WTC11 (cell line): ENCODE measurements at regions of chr17 and their contacts with region 1.

Region 1: GRCh38 chr17:48678141-48678971 is 44.0 kb downstream of the PRAC1 start:
- DNase-seq: peak; percentile 89
- ATAC-seq: peak; percentile 95
- H3K4me3 Mint-ChIP-seq: peak overlapping the region; percentile 64
- H3K27ac Mint-ChIP-seq: no peak overlapping the region
- H3K4me1 Mint-ChIP-seq: peaks cover 7% of the 10 kb centered on the region
- H3K27me3 Mint-ChIP-seq: peaks cover 37% of the 10 kb centered on the region
- CTCF ChIP-seq: peak; percentile 95

Region 2: GRCh38 chr17:48663134-48663924 is 15.0 kb before region 1 on chr17:
- CTCF ChIA-PET with region 1: interaction called, 34 read pairs
- POLR2A ChIA-PET with region 1: no interaction called
- DNase-seq: no peak
- ATAC-seq: peak; percentile 72
- H3K4me3 Mint-ChIP-seq: no peak overlapping the region
- H3K27ac Mint-ChIP-seq: no peak overlapping the region
- H3K4me1 Mint-ChIP-seq: no peaks in the 10 kb centered on the region
- H3K27me3 Mint-ChIP-seq: peaks cover 35% of the 10 kb centered on the region
- CTCF ChIP-seq: no peak

Region 3: DNA sequence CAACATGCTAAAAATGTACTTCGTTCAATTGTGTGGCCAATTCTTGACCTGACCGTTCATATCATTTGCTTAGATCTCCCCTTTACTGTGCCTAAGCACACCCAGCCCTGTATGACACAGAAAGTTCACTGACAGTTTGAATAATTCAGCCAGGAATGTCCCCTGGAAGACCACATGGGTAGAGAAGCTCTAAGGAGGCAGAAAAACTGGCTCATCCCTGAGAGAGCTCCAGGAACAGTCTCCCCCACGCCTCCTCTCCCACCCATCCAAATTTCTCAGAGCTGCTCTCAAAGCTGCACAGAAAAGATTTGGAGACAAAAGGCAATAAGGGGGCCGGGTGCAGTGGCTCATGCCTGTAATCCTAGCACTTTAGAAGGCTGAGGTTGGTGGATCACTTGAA is 32.7 kb after region 1 on chr17:
- CTCF ChIA-PET with region 1: interaction called, 41 read pairs
- POLR2A ChIA-PET with region 1: interaction called, 3 read pairs
- DNase-seq: no peak
- ATAC-seq: no peak
- H3K4me3 Mint-ChIP-seq: no peak overlapping the region
- H3K27ac Mint-ChIP-seq: no peak overlapping the region
- H3K4me1 Mint-ChIP-seq: peaks cover 11% of the 10 kb centered on the region
- H3K27me3 Mint-ChIP-seq: peaks cover 78% of the 10 kb centered on the region
- CTCF ChIP-seq: no peak

Region 4: DNA sequence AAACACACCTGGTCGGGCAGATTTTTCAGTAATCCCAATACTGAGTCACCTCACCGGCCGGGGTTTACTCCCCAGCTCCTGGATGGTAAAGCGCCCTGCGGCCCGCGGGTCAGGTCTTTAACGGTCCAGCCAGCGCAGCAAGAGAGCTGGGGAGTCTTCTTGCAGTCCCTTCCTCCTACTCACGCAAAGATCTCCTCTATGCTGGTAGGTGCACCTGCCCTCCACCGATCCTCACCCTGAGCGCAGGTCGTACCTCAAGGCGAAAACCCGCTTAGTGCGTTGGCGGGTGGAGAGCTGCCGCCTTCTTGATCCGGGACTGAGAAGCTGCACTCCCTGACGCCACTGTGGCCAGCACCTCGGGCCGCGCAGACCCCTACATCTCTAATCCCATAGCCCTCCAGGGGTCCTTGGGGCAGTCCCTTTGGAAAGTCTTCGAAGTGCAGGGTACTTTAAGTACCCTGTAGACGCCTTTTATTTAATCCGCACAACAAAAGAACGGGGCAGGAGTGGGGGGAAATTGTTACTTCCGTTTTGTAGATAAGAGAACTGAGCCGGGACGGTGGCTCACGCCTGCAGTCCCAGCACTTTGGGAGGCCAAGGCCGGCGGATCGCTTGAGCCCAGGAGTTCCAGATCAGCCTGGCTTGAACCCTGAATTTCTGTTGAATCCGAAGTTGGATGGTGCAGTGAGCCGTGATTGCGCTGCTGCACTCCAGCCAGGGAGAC is 60.6 kb after region 1 on chr17:
- CTCF ChIA-PET with region 1: interaction called, 29 read pairs
- POLR2A ChIA-PET with region 1: no interaction called
- DNase-seq: no peak
- ATAC-seq: peak; percentile 68
- H3K4me3 Mint-ChIP-seq: peak overlapping the region; percentile 56
- H3K27ac Mint-ChIP-seq: no peak overlapping the region
- H3K4me1 Mint-ChIP-seq: peaks cover 15% of the 10 kb centered on the region
- H3K27me3 Mint-ChIP-seq: peaks cover 100% of the 10 kb centered on the region
- CTCF ChIP-seq: no peak

Region 5: DNA sequence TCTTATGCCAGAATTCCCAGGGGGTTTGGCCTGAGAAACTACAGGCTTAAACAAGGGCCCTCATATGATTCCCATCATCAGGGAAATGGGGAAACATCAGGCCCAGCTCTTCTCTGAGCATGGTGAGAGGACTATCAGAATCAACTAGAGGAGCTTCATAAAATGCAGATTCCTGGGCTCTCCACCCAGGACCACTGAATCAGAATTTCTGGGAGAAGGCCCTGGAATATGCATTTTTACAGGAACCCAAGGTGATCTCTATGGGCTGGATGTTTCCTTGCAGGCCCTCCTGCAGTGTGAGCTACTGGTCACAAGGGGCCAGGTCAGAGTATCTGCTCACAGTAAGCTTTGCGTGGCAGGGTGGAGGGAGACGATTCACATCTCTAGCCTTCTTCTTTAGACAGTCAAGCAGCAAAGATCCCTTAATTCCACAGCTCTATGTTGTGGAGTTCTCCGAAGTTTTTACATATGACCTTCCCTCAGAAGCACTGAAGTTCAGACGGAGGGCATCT is 89.0 kb after region 1 on chr17:
- CTCF ChIA-PET with region 1: interaction called, 25 read pairs
- POLR2A ChIA-PET with region 1: no interaction called
- DNase-seq: no peak
- ATAC-seq: peak; percentile 72
- H3K4me3 Mint-ChIP-seq: no peak overlapping the region
- H3K27ac Mint-ChIP-seq: no peak overlapping the region
- H3K4me1 Mint-ChIP-seq: no peaks in the 10 kb centered on the region
- H3K27me3 Mint-ChIP-seq: peaks cover 57% of the 10 kb centered on the region
- CTCF ChIP-seq: no peak

Region 6: DNA sequence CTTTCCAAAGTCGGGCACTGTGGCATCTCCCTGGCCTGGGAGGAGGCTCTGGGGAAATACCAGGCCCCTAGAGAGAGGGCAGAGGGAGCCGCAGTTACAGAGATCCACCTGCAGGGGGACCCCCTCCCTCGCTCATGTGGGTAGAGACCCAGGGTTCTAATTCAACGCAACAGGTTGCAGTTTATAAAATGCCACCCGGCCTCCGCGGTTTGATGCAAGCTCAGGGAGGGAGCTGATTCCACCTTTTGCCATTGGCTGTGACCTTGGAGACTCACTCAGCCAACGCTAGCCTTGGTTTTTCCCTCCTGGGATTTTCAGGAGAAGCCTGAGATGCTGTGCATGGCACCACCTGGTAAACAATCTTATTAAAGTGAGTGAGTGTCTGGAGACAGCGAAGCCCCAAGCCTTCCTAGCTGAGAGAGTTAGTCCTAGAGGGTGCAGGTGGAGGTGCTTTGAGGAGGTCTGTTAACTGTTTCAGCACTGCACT is 126.6 kb after region 1 on chr17:
- CTCF ChIA-PET with region 1: interaction called, 52 read pairs
- POLR2A ChIA-PET with region 1: interaction called, 3 read pairs
- DNase-seq: peak; percentile 94
- ATAC-seq: peak; percentile 99
- H3K4me3 Mint-ChIP-seq: peak overlapping the region; percentile 24; the same call in 1 of the 2 replicates
- H3K27ac Mint-ChIP-seq: no peak overlapping the region
- H3K4me1 Mint-ChIP-seq: peaks cover 5% of the 10 kb centered on the region
- H3K27me3 Mint-ChIP-seq: no peaks in the 10 kb centered on the region
- CTCF ChIP-seq: peak; percentile 95

Region 7: GRCh38 chr17:48892940-48893645 is 214.7 kb after region 1 on chr17:
- CTCF ChIA-PET with region 1: interaction called, 11 read pairs
- POLR2A ChIA-PET with region 1: no interaction called
- DNase-seq: no peak
- ATAC-seq: no peak
- H3K4me3 Mint-ChIP-seq: peak overlapping the region; percentile 96
- H3K27ac Mint-ChIP-seq: peak overlapping the region; percentile 98
- H3K4me1 Mint-ChIP-seq: peaks cover 11% of the 10 kb centered on the region
- H3K27me3 Mint-ChIP-seq: no peaks in the 10 kb centered on the region
- CTCF ChIP-seq: no peak